Activated CD4-positive, alpha-beta memory T cell treated with anti-CD3 and anti-CD28 coated beads for 36 hours (primary cell): ENCODE measurements at regions of chr7 and their contacts with region 1.

Region 1: DNA sequence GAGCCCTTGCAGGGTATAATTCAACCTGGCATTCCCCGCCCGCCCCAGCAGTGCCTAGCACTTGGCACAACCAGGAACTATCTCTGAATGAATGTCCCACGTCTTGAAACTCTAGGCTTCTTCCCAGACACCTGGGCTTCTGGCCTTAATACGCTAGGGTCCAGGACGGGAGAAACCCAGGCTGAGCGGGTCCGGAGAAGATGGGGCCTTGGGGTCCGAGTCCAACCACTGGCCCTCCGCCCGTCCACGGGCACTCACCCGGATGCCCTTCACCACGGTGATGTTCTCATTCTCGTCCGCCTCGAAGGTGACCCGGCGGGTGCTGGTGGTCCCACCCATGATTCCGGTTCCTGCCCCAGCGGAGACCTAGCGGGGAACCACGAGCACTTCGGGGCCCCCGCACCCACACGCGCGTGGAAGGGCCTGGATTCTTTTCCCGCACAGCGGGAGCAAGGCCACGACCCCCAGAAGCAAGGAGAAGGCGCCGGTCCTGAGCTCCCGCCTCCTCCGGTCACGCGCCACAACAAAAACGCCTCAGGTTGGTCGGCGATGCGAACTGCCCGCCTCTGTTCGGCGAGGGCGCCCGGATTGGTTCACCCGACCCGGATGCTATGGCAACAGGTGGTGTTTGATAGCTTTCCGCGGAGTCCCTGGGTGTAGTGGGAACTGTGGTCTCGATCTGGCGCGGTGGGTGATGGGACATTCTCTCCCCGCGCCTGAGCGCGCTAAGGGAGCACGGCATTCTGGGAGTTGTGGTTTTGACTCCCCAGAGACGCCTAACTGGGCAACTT is at the start of gene CHCHD3:
- DNase-seq: peak; percentile 98
- H3K4me3 Mint-ChIP-seq: peak within 1 kb of the TSS; percentile 88
- H3K27ac Mint-ChIP-seq: peak within 1 kb of the TSS; percentile 87
- H3K4me1 Mint-ChIP-seq: peaks cover 23% of the 10 kb centered on the region
- H3K27me3 Mint-ChIP-seq: no peaks in the 10 kb centered on the region
- total RNA-seq, gene CHCHD3: 49.6 to 51.0 TPM

Region 2: DNA sequence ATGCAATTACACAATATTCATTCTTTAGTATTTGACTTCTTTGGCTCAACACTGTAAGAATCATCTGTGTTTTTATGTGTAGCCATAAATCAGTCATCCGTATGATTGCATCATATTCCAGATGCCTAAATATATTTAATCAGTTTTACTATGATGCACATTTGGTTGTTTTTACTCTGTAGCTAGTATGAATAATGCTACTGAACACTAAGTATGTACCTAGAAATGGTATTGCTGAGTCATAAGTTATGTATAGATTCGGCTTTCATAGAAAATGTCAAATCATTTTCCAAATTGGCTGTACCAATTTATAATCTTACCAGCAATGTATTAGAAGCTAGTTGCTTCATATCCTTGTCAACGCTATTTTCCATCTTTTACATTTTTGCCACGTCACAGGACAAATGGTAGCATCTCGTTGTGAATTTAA is 308.3 kb before region 1 on chr7:
- CTCF ChIA-PET with region 1: no interaction called
- POLR2A ChIA-PET with region 1: no interaction called
- intact Hi-C with region 1: loop called (anchors 10 kb)
- DNase-seq: no peak
- H3K4me3 Mint-ChIP-seq: no peak overlapping the region
- H3K27ac Mint-ChIP-seq: no peak overlapping the region
- H3K4me1 Mint-ChIP-seq: peaks cover 41% of the 10 kb centered on the region
- H3K27me3 Mint-ChIP-seq: peaks cover 9% of the 10 kb centered on the region

Region 3: GRCh38 chr7:132882714-132883428 is 198.9 kb before region 1 on chr7:
- CTCF ChIA-PET with region 1: no interaction called
- POLR2A ChIA-PET with region 1: no interaction called
- intact Hi-C with region 1: loop called (anchors 5 kb)
- DNase-seq: peak; percentile 55
- H3K4me3 Mint-ChIP-seq: no peak overlapping the region
- H3K27ac Mint-ChIP-seq: no peak overlapping the region
- H3K4me1 Mint-ChIP-seq: peaks cover 26% of the 10 kb centered on the region
- H3K27me3 Mint-ChIP-seq: no peaks in the 10 kb centered on the region

Region 4: GRCh38 chr7:133234961-133235875 is 153.4 kb after region 1 on chr7:
- CTCF ChIA-PET with region 1: no interaction called
- POLR2A ChIA-PET with region 1: no interaction called
- intact Hi-C with region 1: no loop called
- DNase-seq: no peak
- H3K4me3 Mint-ChIP-seq: no peak overlapping the region
- H3K27ac Mint-ChIP-seq: no peak overlapping the region
- H3K4me1 Mint-ChIP-seq: no peaks in the 10 kb centered on the region
- H3K27me3 Mint-ChIP-seq: peaks cover 6% of the 10 kb centered on the region

Region 5: DNA sequence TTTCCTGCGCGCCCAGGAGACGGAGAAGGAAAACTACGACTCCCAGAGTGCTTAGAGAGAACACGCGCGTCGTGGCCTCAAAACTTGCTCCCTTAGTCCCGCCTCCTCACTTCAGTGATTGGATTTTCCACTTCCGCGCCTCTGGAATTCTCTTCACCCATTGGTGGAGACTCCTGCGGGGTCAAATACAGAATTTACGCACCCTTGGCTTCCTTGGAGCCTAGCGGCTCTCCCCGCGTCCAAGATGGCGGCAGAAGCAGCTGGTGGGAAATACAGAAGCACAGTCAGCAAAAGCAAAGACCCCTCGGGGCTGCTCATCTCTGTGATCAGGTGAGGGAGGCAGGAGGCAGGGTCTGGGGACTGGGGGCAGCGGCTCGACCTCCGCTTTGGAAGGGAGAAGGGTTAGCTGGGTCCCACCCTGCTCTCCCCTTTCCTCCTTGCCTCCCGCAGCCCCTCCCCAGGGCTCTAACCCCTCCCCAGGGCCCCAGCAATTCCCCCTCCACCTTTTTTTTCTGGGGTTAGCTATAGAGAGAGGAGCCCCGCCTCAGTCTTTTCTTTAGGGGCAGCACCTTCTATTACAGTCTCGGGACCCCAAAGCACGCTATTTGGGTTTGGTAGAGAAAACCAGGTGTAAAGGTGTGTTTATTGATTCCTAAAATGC is 171.2 kb after region 1 on chr7 and contains the start of gene EXOC4:
- CTCF ChIA-PET with region 1: no interaction called
- POLR2A ChIA-PET with region 1: interaction called, 3 read pairs
- intact Hi-C with region 1: loop called (anchors 1 kb)
- DNase-seq: peak; percentile 95
- H3K4me3 Mint-ChIP-seq: peak within 1 kb of the TSS; percentile 89
- H3K27ac Mint-ChIP-seq: peak within 1 kb of the TSS; percentile 85
- H3K4me1 Mint-ChIP-seq: peaks cover 30% of the 10 kb centered on the region
- H3K27me3 Mint-ChIP-seq: no peaks in the 10 kb centered on the region
- total RNA-seq, gene EXOC4: 55.8 to 60.8 TPM

Region 6: GRCh38 chr7:134126966-134127848 is 1045.4 kb after region 1 on chr7 and contains the start of gene LRGUK:
- CTCF ChIA-PET with region 1: no interaction called
- POLR2A ChIA-PET with region 1: no interaction called
- intact Hi-C with region 1: loop called (anchors 2 kb)
- DNase-seq: peak; percentile 84
- H3K4me3 Mint-ChIP-seq: peak within 1 kb of the TSS; percentile 81
- H3K27ac Mint-ChIP-seq: no peak within 1 kb of the TSS
- H3K4me1 Mint-ChIP-seq: peaks cover 15% of the 10 kb centered on the region
- H3K27me3 Mint-ChIP-seq: peaks cover 13% of the 10 kb centered on the region
- total RNA-seq, gene LRGUK: 0.07 TPM